ENCODE measurements at regions of chr3 and their contacts with region 1.

Region 1: DNA sequence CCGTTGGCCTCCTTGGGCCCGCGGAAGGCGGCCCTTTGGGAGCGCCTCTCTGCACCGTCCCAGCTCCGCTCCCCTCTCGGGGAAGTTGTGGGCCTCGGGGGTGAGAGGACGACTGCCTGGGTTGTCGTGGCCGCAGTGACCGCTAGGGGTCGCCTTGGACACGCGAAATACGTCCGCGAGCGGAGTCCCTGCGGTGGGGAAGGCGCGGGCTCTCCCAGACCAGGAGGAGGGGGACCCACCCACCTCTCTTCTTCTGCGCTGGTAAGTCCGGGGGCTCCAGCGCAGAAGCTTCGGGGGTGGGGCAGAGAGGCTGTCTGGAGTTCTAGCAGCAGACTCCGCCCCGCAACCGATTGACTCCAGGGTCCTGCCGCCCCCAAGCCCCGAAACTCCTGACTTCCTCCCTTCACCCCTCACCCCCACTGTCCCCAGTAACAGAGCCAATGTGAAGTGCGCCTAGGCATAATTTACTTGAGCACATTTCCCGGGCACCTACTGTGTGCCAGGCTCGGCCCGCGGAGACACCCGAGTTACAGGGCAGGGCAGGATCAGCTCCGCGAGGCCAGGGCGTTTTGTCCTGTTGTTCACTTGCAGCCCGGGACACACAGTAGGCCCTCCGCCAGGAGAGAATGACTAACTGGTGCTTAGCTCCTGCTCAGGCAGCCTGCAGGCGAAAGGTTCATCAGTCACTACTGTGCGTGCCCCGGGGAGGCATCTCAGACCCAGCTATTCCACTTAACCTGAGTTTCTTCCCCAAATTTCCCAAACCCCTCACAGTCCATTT is 32.8 kb downstream of the DNASE1L3 start:
- DNase-seq: peak; percentile 95
- ATAC-seq: peak; percentile 86
- H3K4me3 Mint-ChIP-seq: peak overlapping the region; percentile 61
- H3K27ac Mint-ChIP-seq: peak overlapping the region; percentile 31
- H3K4me1 Mint-ChIP-seq: peaks cover 13% of the 10 kb centered on the region
- H3K27me3 Mint-ChIP-seq: peaks cover 4% of the 10 kb centered on the region

Region 2: DNA sequence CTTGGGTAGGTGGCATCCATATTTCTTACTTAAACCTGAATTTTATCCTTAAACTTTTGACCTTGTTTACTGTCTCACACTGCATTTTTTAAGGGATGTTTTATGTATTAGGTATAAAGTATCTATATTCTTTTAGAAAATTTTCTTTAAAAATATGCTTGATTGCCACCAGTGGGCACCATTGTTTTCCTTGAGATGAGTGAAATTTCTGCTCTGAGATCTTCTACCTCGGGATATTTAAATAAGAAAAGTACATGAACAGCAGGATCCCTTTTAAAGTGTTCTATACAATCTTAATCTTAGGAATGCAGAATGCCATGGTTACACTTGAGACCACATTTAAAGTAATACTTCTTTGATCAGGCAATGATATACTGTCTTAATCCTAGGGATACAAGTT is 313.1 kb before region 1 on chr3:
- CTCF ChIA-PET with region 1: no interaction called
- POLR2A ChIA-PET with region 1: no interaction called
- intact Hi-C with region 1: no loop called
- DNase-seq: no peak
- ATAC-seq: no peak
- H3K4me3 Mint-ChIP-seq: no peak overlapping the region
- H3K27ac Mint-ChIP-seq: no peak overlapping the region
- H3K4me1 Mint-ChIP-seq: no peaks in the 10 kb centered on the region
- H3K27me3 Mint-ChIP-seq: no peaks in the 10 kb centered on the region

Region 3: DNA sequence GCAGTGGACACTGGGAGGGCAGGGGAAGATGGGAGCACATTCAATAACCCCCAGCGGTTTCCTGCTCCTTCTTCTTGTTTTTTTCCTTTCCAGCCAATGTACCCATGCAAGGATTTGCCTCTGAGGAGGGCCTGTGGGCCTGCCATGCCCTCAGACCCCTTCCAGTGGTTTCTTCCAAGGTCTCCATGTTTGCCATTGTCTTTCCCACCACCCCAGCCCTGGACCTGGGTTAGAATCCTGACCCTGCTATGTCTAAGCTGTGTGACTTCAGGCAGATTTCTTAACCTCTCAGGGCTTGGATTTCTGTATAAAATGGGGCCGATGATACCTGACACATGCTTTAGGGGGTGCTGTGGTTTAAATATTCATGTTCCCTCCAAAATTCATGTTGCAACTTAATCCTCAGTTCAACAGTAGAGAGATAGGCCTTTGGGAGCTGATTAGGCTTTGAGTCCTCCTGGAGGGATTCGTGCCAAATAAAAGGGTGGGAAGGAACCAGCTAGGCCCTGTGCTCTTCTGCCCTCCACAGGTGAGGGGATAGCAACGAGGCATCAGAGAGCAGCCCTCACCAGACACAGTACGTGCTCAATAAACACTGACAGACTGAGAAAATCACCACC is 216.0 kb before region 1 on chr3:
- CTCF ChIA-PET with region 1: interaction called, 3 read pairs
- POLR2A ChIA-PET with region 1: no interaction called
- intact Hi-C with region 1: loop called (anchors 2 to 5 kb)
- DNase-seq: peak; percentile 12
- ATAC-seq: peak; percentile 71
- H3K4me3 Mint-ChIP-seq: no peak overlapping the region
- H3K27ac Mint-ChIP-seq: no peak overlapping the region
- H3K4me1 Mint-ChIP-seq: peaks cover 2% of the 10 kb centered on the region
- H3K27me3 Mint-ChIP-seq: no peaks in the 10 kb centered on the region

Region 4: DNA sequence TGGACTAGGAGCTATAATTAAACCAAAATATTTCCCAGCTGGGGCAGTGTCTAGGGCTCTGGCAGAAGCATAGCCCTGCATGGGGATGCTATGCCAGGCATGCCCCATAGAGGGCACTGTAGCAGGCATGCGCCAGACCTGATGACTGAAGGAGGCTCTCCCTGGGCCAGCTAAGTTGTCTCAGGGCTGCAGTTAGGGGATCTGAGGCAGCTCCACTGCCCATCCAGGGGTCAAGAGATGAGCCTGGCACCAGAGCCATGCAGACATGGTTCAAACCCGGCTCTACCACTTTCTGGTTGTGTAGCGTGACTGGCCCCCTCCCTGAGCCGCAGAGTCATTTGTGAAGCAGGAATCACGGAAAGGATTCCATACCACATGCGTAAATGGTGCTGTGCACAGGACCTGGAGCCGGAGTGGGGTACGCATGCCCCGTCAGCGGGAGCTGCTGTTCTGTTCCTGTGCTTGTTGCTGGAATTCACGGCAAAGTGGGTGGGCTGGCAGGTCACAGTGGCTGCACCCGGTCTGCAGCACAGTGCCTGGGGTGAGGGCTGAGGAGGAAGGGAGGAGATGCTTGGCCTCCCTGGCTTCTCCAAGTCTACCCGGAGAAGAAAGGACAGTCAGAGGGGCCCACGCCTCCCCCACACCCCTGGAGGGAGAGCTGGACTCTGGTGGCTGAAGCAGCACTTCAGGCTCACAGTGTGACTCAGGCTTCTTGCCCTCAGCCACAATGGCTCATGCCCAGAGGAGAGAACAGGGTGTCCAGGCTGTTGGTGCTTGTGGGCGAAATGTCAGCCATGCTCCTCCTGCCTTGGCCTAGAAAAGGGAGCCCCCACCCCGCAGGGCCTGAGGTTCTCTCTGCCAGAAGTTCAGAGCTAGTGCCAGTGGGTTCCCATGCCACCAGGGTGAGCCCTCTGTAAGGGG is 10.2 kb before region 1 on chr3:
- CTCF ChIA-PET with region 1: interaction called, 37 read pairs
- POLR2A ChIA-PET with region 1: no interaction called
- intact Hi-C with region 1: no loop called
- DNase-seq: peak; percentile 83
- ATAC-seq: peak; percentile 98
- H3K4me3 Mint-ChIP-seq: no peak overlapping the region
- H3K27ac Mint-ChIP-seq: no peak overlapping the region
- H3K4me1 Mint-ChIP-seq: no peaks in the 10 kb centered on the region
- H3K27me3 Mint-ChIP-seq: no peaks in the 10 kb centered on the region

Region 5: DNA sequence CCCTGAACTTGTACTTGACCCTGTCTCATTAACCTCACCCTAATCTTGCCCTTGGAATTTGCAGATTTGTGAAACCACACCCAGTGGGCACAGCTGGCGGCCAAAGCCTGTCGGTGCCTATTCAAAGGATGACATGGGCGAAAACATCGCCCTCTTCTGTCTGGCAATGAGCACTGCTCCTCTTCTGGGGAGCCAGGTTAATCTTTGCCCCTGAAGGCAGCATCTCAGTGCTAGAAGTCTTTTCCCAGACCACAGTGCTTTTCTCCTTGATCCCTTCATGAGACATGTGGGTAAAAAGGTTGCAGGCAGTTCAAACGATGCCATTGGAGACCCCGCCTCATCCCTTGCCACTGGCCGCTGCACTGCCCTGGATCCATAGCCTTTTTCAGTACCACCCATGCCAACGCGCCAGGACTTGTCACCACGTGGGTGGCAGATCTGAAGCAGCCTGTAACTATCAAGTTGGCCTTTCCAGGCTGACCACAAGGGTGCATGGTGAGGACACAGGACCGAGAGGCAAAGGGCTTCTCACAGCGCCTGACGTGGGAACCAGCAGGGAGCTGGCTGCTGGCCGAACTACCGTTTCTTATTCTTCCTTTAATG is 39.4 kb after region 1 on chr3:
- CTCF ChIA-PET with region 1: interaction called, 21 read pairs
- POLR2A ChIA-PET with region 1: no interaction called
- intact Hi-C with region 1: loop called (anchors 1 to 5 kb)
- DNase-seq: peak; percentile 76
- ATAC-seq: peak; percentile 34
- H3K4me3 Mint-ChIP-seq: peak overlapping the region; percentile 9
- H3K27ac Mint-ChIP-seq: no peak overlapping the region
- H3K4me1 Mint-ChIP-seq: peaks cover 36% of the 10 kb centered on the region
- H3K27me3 Mint-ChIP-seq: peaks cover 4% of the 10 kb centered on the region

Region 6: GRCh38 chr3:58231666-58232065 is 53.7 kb after region 1 on chr3:
- CTCF ChIA-PET with region 1: interaction called, 10 read pairs
- POLR2A ChIA-PET with region 1: interaction called, 5 read pairs
- intact Hi-C with region 1: no loop called
- DNase-seq: no peak
- ATAC-seq: no peak
- H3K4me3 Mint-ChIP-seq: no peak overlapping the region
- H3K27ac Mint-ChIP-seq: no peak overlapping the region
- H3K4me1 Mint-ChIP-seq: no peaks in the 10 kb centered on the region
- H3K27me3 Mint-ChIP-seq: peaks cover 18% of the 10 kb centered on the region

Region 7: GRCh38 chr3:58329150-58329921 is 151.4 kb after region 1 on chr3:
- CTCF ChIA-PET with region 1: no interaction called
- POLR2A ChIA-PET with region 1: no interaction called
- intact Hi-C with region 1: no loop called
- DNase-seq: no peak
- ATAC-seq: no peak
- H3K4me3 Mint-ChIP-seq: no peak overlapping the region
- H3K27ac Mint-ChIP-seq: no peak overlapping the region
- H3K4me1 Mint-ChIP-seq: peaks cover 29% of the 10 kb centered on the region
- H3K27me3 Mint-ChIP-seq: no peaks in the 10 kb centered on the region

Region 8: DNA sequence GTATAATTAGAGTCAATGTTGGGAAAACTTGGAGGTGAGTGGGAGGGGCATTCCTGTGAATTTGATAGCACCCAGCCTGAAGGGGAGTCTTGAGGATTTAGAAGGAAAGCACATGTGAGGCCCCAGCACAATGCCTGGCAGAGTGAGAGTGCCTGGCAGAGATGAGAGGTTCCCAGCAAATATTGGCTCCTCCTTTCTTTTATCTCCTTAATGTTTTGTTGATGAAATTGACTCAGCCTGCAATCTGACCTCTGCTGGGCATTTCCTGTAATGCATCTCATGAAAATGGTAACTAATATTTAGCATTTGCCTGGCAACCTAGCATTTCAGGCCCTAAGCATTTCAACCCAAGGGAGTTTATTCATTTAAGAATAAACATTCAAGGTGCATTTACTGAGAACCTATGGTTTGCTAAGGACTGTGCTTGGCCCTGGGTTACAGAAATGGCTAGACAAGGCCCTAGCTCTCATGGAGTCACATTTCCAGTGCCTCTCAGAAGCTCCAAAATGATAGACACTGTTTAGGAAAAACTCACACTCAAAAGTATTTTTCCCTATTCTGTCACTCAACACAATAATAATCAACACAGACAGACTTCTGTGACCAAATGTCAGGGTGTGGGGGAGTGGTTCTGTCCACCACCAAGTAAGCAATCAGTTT is 236.7 kb after region 1 on chr3:
- CTCF ChIA-PET with region 1: interaction called, 8 read pairs
- POLR2A ChIA-PET with region 1: no interaction called
- intact Hi-C with region 1: loop called in 1 of 2 experiments (anchors 2 kb)
- DNase-seq: peak; percentile 56
- ATAC-seq: peak; percentile 85
- H3K4me3 Mint-ChIP-seq: no peak overlapping the region
- H3K27ac Mint-ChIP-seq: no peak overlapping the region
- H3K4me1 Mint-ChIP-seq: peaks cover 4% of the 10 kb centered on the region
- H3K27me3 Mint-ChIP-seq: no peaks in the 10 kb centered on the region

Region 9: DNA sequence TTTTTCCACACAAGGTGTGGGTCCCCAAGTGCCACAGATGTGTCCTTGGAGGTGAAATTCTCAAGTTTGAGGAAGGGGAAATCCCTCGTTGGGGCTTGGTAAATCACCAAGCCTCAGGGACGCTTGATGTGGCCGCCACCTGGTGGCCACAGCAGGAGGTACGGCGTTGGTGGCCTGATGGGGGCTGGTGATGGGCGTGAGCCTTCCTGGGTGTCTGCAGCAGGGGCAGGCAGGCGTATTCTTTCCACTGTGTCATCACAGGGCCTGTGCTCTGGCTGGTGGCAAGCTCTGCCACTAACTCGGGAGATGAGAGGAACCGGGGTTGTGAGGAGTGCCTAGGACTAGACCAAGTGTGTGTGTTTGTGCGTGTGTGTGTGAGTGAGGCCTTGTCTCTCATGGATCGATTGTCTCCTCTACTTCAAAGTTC is 354.9 kb after region 1 on chr3:
- CTCF ChIA-PET with region 1: no interaction called
- POLR2A ChIA-PET with region 1: no interaction called
- intact Hi-C with region 1: loop called in 1 of 2 experiments (anchors 1 kb)
- DNase-seq: peak; percentile 92
- ATAC-seq: peak; percentile 97
- H3K4me3 Mint-ChIP-seq: no peak overlapping the region
- H3K27ac Mint-ChIP-seq: peak overlapping the region; percentile 67
- H3K4me1 Mint-ChIP-seq: peaks cover 13% of the 10 kb centered on the region
- H3K27me3 Mint-ChIP-seq: no peaks in the 10 kb centered on the region